ENCODE measurements at regions of chr1 and their contacts with region 1.

Region 1: GRCh38 chr1:27671964-27672749 is at the start of gene IFI6:
- DNase-seq: peak; percentile 47 to 94 (median 80)
- ATAC-seq: peak; percentile 92
- H3K4me3 ChIP-seq: peak within 1 kb of the TSS; percentile 48 to 71
- H3K4me3 Mint-ChIP-seq: peak within 1 kb of the TSS; percentile 92
- H3K27ac ChIP-seq: peak within 1 kb of the TSS; percentile 62 to 87
- H3K27ac Mint-ChIP-seq: peak within 1 kb of the TSS; percentile 98
- H3K4me1 ChIP-seq: peaks cover 35% of the 10 kb centered on the region
- H3K4me1 Mint-ChIP-seq: peaks cover 42% of the 10 kb centered on the region
- H3K27me3 ChIP-seq: no peaks in the 10 kb centered on the region
- H3K27me3 Mint-ChIP-seq: no peaks in the 10 kb centered on the region
- CTCF ChIP-seq: peak; percentile 28
- total RNA-seq, gene IFI6: 24.8 to 25.1 TPM

Region 2: DNA sequence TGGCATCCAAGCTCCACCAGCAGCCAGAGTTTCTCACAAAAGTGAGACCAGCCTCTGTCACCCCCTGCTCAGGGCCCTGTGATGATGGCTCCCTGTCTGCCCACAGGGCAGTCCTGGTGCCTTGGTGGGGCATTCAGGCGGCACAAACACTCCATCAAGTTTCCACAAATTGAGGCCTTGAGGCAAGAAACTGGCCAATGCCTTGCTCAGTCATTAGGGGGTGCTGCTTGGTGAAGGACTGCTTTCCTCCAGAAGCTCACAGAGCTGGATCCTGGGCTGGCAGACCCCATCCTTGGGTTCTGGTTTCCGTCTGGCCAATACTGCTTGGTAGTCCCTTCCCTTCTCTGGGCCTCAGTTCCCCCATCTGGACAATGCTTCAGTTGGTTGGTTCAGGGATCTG is 55.7 kb before region 1 on chr1:
- CTCF ChIA-PET with region 1: interaction called, 405 read pairs
- POLR2A ChIA-PET with region 1: interaction called, 5 read pairs
- intact Hi-C with region 1: no loop called
- DNase-seq: peak in 1 of 9 experiments; percentile 19
- ATAC-seq: no peak
- H3K4me3 ChIP-seq: no peak overlapping the region
- H3K4me3 Mint-ChIP-seq: no peak overlapping the region
- H3K27ac ChIP-seq: peak overlapping the region in 1 of 2 experiments; percentile 80
- H3K27ac Mint-ChIP-seq: peak overlapping the region; percentile 84
- H3K4me1 ChIP-seq: peaks cover 65% of the 10 kb centered on the region
- H3K4me1 Mint-ChIP-seq: peaks cover 65% of the 10 kb centered on the region
- H3K27me3 ChIP-seq: no peaks in the 10 kb centered on the region
- H3K27me3 Mint-ChIP-seq: no peaks in the 10 kb centered on the region
- CTCF ChIP-seq: no peak

Region 3: GRCh38 chr1:27719286-27720251 is 47.4 kb after region 1 on chr1:
- CTCF ChIA-PET with region 1: interaction called, 13 read pairs
- POLR2A ChIA-PET with region 1: interaction called, 30 read pairs
- intact Hi-C with region 1: loop called in 1 of 2 experiments (anchors 1 kb)
- DNase-seq: peak in 2 of 9 experiments; percentile 26 to 33
- ATAC-seq: peak; percentile 42
- H3K4me3 ChIP-seq: no peak overlapping the region
- H3K4me3 Mint-ChIP-seq: no peak overlapping the region
- H3K27ac ChIP-seq: no peak overlapping the region
- H3K27ac Mint-ChIP-seq: no peak overlapping the region
- H3K4me1 ChIP-seq: no peaks in the 10 kb centered on the region
- H3K4me1 Mint-ChIP-seq: peaks cover 1% of the 10 kb centered on the region
- H3K27me3 ChIP-seq: peaks cover 0 to 9% of the 10 kb centered on the region in 2 experiments
- H3K27me3 Mint-ChIP-seq: peaks cover 17% of the 10 kb centered on the region
- CTCF ChIP-seq: peak; percentile 45

Region 4: GRCh38 chr1:27772933-27773825 is 101.0 kb after region 1 on chr1 and contains the start of gene STX12:
- CTCF ChIA-PET with region 1: interaction called, 5 read pairs
- POLR2A ChIA-PET with region 1: interaction called, 3 read pairs
- intact Hi-C with region 1: loop called (anchors 2 to 5 kb)
- DNase-seq: peak; percentile 96 to 100 (median 98)
- ATAC-seq: peak; percentile 91
- H3K4me3 ChIP-seq: peak within 1 kb of the TSS; percentile 94 to 98
- H3K4me3 Mint-ChIP-seq: peak within 1 kb of the TSS; percentile 91
- H3K27ac ChIP-seq: peak within 1 kb of the TSS; percentile 76 to 94
- H3K27ac Mint-ChIP-seq: peak within 1 kb of the TSS; percentile 98
- H3K4me1 ChIP-seq: peaks cover 16% of the 10 kb centered on the region
- H3K4me1 Mint-ChIP-seq: peaks cover 37% of the 10 kb centered on the region
- H3K27me3 ChIP-seq: no peaks in the 10 kb centered on the region
- H3K27me3 Mint-ChIP-seq: no peaks in the 10 kb centered on the region
- CTCF ChIP-seq: no peak
- total RNA-seq, gene STX12: 21.0 to 26.0 TPM